ENCODE measurements at regions of chr5 and their contacts with region 1.

Region 1: DNA sequence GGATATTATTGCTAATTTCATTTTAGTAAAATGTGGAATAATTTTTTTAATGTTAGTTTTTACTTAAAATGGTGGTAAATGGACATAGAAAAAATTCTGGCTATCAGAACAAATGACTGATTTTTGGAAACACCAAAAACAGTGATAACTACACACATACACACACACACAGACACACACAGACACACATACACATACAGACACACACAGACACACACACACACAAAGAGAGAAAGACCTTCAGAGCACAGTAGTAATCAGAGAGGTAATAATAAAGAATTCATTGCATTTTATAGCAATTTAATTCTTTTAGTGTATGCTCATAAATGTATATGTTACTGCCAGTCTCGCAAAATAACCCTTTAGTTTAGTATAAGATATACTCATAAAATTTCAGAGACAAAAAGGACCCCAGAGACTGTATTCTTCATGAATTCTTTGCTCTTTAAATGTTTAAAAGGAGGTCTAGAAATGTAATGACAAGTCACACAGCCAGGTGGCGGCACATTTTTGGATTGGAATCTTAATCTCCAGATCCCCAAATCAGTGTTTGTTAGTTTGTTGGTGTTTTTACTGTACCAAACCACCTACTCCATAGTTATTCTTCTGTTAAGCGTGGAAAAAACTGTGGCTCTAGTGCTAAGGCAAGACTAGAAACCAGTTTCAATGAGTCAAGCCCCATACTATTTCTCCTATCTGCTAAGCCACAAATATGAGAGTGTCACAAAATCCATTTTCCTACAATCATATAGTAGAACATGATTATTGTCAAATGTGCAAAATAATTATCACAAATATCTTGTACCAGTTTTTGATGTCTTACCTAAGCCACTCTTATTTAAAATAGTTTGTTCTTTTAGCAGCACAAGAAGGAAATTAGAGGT is 109.9 kb downstream of the EDIL3 start:
- DNase-seq: no peak
- ATAC-seq: no peak
- H3K4me3 ChIP-seq: no peak overlapping the region
- H3K27ac ChIP-seq: no peak overlapping the region
- H3K4me1 ChIP-seq: peaks cover 0 to 2% of the 10 kb centered on the region in 2 donors
- H3K27me3 ChIP-seq: no peaks in the 10 kb centered on the region

Region 2: GRCh38 chr5:84202136-84202535 is 72.7 kb before region 1 on chr5:
- intact Hi-C with region 1: no loop called
- DNase-seq: no peak
- ATAC-seq: no peak
- H3K4me3 ChIP-seq: no peak overlapping the region
- H3K27ac ChIP-seq: no peak overlapping the region
- H3K4me1 ChIP-seq: no peaks in the 10 kb centered on the region
- H3K27me3 ChIP-seq: no peaks in the 10 kb centered on the region

Region 3: GRCh38 chr5:84450617-84451414 is 176.0 kb after region 1 on chr5:
- intact Hi-C with region 1: loop called in 1 of 2 experiments (anchors 10 kb)
- DNase-seq: no peak
- ATAC-seq: no peak
- H3K4me3 ChIP-seq: no peak overlapping the region
- H3K27ac ChIP-seq: no peak overlapping the region
- H3K4me1 ChIP-seq: no peaks in the 10 kb centered on the region
- H3K27me3 ChIP-seq: no peaks in the 10 kb centered on the region

Region 4: GRCh38 chr5:84474126-84474525 is 199.3 kb after region 1 on chr5:
- intact Hi-C with region 1: loop called in 1 of 2 experiments (anchors 10 kb)
- DNase-seq: no peak
- ATAC-seq: no peak
- H3K4me3 ChIP-seq: no peak overlapping the region
- H3K27ac ChIP-seq: no peak overlapping the region
- H3K4me1 ChIP-seq: no peaks in the 10 kb centered on the region
- H3K27me3 ChIP-seq: no peaks in the 10 kb centered on the region